A673 (cell line): ENCODE measurements at regions of chr10 and their contacts with region 1.

Region 1: DNA sequence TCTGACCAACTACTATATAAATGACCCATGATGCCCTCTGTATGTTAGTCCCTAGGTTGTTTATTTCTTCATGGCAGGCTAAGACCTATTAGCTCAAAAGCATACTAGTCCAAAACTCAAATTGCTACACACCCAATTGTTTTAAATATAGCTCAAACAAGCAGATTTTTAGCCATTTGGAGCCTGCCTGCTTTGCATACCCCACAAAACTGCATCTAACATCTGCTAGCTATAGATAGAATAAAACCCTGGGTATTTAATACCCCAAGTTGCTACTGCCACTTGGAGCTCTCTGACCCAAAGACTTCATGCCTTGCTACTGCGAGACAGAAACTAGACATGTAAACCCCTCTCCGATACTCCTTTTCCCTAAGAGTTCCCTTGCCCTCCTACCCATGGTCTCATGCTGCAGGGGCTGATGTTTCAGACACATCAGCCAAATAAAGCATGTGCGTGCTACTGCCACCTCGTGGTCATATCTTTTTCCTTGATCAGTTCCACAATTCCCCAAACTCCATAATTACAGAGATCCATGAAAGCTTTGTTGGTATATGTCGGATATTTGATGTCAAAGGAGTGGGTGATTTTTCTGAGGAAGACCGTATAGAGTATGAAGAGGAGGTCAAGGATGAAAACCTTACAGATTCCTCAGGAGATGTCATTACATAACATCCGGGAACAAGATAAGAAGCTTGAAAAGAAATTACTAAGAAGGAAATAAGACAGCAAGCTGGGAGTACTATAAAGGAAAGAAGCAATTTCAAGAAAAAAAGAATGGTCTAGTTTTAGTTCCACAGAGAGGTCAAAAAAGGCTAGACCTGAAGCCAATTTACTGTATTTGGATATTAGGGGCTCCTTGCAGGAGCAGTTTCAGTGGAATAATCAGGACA is 386.6 kb downstream of the SH2D4B start:
- DNase-seq: peak; percentile 62
- H3K4me3 ChIP-seq: no peak overlapping the region
- H3K27ac ChIP-seq: no peak overlapping the region
- H3K4me1 ChIP-seq: no peaks in the 10 kb centered on the region
- H3K27me3 ChIP-seq: no peaks in the 10 kb centered on the region
- CTCF ChIP-seq: peak; percentile 77

Region 2: DNA sequence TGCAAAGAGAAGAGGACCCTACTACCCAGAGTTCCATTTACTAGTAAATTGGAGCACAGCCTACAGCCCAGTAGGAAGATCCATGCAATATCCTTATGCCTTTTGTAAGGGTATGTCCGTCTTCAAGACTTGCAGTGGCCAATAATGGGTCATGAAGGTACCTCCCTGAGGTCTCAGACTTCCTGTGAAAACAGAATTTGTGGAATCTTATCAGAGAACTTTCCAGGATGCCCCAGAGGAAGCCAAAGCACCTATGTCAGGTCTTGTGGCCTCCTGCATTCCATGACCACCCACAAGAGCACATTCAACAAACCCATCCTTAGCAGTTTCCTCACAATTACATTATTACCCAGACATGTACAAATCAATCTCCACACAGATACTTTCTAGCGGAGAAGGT is 534.5 kb before region 1 on chr10:
- CTCF ChIA-PET with region 1: no interaction called
- POLR2A ChIA-PET with region 1: no interaction called
- intact Hi-C with region 1: loop called (anchors 5 kb)
- DNase-seq: no peak
- H3K4me3 ChIP-seq: no peak overlapping the region
- H3K27ac ChIP-seq: no peak overlapping the region
- H3K4me1 ChIP-seq: no peaks in the 10 kb centered on the region
- H3K27me3 ChIP-seq: no peaks in the 10 kb centered on the region
- CTCF ChIP-seq: no peak

Region 3: GRCh38 chr10:80662577-80663261 is 261.6 kb before region 1 on chr10:
- CTCF ChIA-PET with region 1: interaction called, 13 read pairs
- POLR2A ChIA-PET with region 1: no interaction called
- intact Hi-C with region 1: loop called (anchors 10 kb)
- DNase-seq: peak; percentile 88
- H3K4me3 ChIP-seq: peak overlapping the region; percentile 21
- H3K27ac ChIP-seq: no peak overlapping the region
- H3K4me1 ChIP-seq: peaks cover 5% of the 10 kb centered on the region
- H3K27me3 ChIP-seq: no peaks in the 10 kb centered on the region
- CTCF ChIP-seq: peak; percentile 94

Region 4: DNA sequence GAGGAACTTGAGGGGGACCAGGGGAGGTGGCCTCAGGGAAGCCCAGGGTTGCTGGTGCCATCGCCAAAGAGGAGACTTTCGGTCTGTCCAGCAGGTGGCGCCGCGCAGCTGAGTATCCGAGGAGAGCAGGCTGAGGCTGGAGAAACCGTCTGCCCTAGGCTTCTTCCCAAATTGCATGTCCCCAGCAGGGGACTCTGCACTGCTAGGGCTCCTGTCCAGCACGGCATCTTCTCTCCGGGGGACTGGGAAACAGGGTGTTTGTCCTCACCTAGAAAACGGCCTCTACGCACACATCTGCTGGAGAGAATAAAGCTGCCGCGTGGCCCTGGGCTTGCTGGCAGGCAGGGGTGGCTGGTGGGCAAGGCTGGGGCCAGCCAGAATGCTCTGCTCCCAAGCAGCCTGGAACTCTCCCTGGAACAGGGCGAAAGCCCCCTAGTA is 224.7 kb before region 1 on chr10:
- CTCF ChIA-PET with region 1: no interaction called
- POLR2A ChIA-PET with region 1: no interaction called
- intact Hi-C with region 1: loop called (anchors 1 kb)
- DNase-seq: peak; percentile 82
- H3K4me3 ChIP-seq: no peak overlapping the region
- H3K27ac ChIP-seq: no peak overlapping the region
- H3K4me1 ChIP-seq: no peaks in the 10 kb centered on the region
- H3K27me3 ChIP-seq: no peaks in the 10 kb centered on the region
- CTCF ChIP-seq: peak; percentile 90